Activated naive CD4-positive, alpha-beta T cell treated with anti-CD3 and anti-CD28 coated beads for 36 hours (primary cell): ENCODE measurements at regions of chr3 and their contacts with region 1.

Region 1: DNA sequence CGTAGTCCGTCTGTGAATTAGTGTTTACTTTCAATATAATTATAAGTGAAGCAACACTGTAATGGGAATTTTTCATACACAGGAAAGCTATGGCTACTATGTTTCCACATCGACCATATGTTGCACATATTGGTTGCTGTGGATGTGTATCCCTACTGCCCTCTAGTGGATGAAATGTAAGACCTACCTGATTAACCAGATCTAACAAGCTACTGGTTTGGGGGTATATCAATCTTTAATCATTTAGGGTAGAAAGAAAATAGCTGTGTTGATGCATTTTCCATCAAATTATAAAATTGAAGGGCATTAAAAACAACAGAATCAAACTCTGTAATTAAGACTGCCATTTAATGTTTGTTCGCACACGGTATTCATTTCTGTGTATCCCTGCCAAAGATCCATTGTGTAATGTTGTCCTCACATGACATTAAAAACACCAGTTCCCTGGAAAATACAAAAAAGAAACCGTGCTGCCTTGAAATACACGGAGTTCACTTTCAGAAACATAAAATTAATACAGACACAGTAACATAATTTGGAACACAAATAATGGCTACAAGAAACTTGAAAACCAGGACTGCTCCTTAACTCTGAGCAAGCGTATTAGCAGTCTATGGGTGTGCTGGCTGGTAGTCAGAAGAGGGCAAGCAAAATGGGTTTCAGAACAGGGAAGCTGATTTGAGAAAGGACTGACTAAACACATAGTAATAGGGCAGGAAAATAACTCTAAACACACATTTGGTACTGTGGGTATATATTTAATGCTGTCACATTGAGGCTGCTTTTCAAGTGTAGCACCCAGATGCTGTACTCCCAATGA is 125.1 kb downstream of the TIGIT start:
- DNase-seq: no peak
- H3K4me3 Mint-ChIP-seq: peak overlapping the region; percentile 36
- H3K27ac Mint-ChIP-seq: peak overlapping the region; percentile 56
- H3K4me1 Mint-ChIP-seq: peaks cover 32% of the 10 kb centered on the region
- H3K27me3 Mint-ChIP-seq: no peaks in the 10 kb centered on the region

Region 2: DNA sequence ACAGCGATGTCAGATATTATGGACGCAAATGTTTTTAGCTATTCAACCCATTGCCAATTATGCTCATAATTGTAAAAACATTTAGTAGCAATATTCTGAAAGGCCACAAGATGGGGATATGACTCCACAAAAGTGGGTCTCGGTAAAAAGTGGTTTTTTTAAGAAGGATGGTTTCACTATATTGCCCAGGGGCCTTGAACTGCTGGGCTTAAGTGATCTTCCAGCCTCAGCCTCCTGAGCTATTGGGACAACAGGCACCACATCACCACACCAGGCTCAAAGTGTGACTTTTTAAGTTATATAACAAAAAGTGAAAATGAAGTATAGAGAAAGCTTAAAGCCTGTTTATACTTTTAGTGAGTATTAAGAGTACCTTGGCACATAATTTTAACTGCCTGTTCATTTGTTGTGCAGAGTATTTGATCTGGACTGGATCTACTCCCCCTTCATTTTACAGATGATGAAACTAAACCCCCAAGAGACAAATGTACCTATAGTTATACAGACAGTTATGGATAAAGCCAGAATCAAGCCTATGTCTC is 682.3 kb before region 1 on chr3:
- CTCF ChIA-PET with region 1: no interaction called
- intact Hi-C with region 1: loop called (anchors 2 kb)
- DNase-seq: no peak
- H3K4me3 Mint-ChIP-seq: no peak overlapping the region
- H3K27ac Mint-ChIP-seq: peak overlapping the region; percentile 56
- H3K4me1 Mint-ChIP-seq: peaks cover 65% of the 10 kb centered on the region
- H3K27me3 Mint-ChIP-seq: no peaks in the 10 kb centered on the region

Region 3: DNA sequence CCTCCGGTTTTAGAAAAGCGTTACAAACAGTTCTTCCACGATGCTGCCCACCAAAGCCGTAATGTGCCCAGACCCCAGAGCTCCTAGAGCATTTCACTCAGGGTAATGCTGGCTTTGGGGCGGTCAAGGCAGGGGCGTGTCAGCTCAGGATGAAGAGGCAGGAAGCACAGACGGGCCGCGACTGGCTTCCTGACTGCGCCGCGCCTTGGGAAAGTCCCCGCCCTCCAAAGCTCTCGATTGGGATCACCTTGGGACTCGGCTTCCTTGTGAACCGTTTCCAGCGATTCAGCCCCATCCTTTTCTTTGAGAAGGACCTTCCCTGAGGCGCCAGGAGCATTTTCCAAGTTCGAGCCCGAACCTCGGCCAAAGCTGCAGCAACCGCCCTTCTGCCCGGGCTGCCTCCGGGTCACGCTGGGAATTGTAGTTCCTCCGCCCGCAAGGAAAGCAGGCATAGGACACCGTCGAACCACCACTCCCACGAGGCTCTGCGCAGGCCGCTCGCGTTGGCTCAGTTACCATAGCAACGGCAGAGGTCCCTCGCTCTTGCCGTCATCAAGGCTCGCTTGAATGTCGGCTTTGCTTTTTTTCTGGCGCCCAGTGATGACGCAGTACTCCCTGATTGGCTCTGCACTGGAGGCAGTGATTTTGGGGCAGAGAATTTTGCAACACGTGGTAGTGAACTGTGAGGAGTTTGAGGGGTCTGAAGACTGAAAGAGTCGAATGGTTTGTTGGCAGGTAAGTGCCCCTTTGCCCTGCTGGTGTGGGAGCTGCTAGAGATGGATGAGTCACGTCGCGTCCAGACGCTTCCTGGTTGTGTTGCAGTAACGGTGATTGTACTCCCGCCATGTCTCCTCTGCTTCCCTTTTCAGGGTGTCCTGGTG is 362.6 kb before region 1 on chr3 and contains the starts of genes CCDC191 and QTRT2:
- CTCF ChIA-PET with region 1: no interaction called
- intact Hi-C with region 1: loop called (anchors 1 kb)
- DNase-seq: peak; percentile 100
- H3K4me3 Mint-ChIP-seq: peak within 1 kb of the TSS; percentile 97
- H3K27ac Mint-ChIP-seq: peak within 1 kb of the TSS; percentile 95
- H3K4me1 Mint-ChIP-seq: peaks cover 36% of the 10 kb centered on the region
- H3K27me3 Mint-ChIP-seq: no peaks in the 10 kb centered on the region
- total RNA-seq, gene CCDC191: 1.8 to 2.0 TPM
- total RNA-seq, gene QTRT2: 23.0 to 27.8 TPM

Region 4: DNA sequence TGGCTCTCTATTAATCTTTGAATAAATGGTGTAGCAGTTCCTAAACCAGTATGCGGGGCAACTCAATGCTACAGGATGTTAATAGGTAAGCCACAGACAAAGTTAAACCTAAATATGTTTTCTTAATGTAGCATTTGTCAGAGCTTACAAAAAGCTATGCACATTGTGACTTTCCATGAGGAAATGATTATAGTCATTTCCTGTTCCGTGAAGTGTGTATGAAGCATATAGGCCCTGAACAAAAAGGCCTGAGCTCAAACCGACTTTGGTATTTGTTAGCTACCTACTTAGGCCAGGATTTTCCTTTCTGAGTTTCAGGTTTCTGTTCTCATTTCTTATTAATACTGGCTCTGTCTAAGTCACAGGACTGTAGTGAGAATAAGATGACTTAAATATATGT is 195.8 kb before region 1 on chr3:
- CTCF ChIA-PET with region 1: interaction called, 4 read pairs
- intact Hi-C with region 1: loop called (anchors 1 kb)
- DNase-seq: peak; percentile 38
- H3K4me3 Mint-ChIP-seq: no peak overlapping the region
- H3K27ac Mint-ChIP-seq: peak overlapping the region; percentile 84
- H3K4me1 Mint-ChIP-seq: peaks cover 80% of the 10 kb centered on the region
- H3K27me3 Mint-ChIP-seq: no peaks in the 10 kb centered on the region

Region 5: DNA sequence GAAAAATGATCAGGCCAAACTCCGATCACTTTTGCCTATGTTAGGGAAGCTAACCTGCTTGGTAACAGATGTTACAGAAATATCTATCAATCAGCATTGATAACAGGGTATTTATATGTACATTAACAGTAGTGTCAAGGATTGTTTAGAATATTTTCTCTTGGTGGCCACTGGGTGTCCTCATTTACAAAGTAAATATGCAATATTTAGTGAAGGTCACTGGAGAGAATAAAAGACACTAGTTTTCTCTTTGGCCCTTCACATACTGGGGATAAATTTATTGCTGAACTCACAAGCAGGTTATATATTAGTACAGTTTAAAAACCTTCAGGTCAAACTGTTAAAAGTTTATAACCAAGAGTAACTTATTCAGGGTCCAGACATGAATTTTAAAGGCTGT is 56.1 kb before region 1 on chr3:
- CTCF ChIA-PET with region 1: interaction called, 3 read pairs
- intact Hi-C with region 1: loop called (anchors 1 kb)
- DNase-seq: no peak
- H3K4me3 Mint-ChIP-seq: no peak overlapping the region
- H3K27ac Mint-ChIP-seq: no peak overlapping the region
- H3K4me1 Mint-ChIP-seq: peaks cover 2% of the 10 kb centered on the region
- H3K27me3 Mint-ChIP-seq: no peaks in the 10 kb centered on the region

Region 6: DNA sequence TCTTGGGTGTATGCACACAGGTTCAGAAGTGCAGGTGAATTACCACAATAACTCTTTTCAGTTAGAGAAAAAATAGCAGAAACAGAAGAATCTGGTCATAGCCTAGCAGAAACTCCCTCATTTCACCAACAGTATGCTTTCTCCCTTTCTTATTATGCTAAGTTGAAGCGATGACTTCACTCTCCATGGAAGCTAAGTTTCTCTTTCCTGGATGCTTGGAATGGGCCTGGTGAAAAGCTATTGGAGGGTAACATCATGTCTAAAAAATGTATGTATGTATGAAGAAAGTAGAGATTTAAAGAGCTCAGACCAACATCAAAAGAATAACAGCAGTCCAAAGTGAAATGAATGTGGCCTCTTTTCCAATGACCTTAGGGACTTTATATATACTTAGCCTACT is 20.4 kb after region 1 on chr3:
- CTCF ChIA-PET with region 1: interaction called, 5 read pairs
- intact Hi-C with region 1: loop called (anchors 2 kb)
- DNase-seq: no peak
- H3K4me3 Mint-ChIP-seq: no peak overlapping the region
- H3K27ac Mint-ChIP-seq: no peak overlapping the region
- H3K4me1 Mint-ChIP-seq: peaks cover 7% of the 10 kb centered on the region
- H3K27me3 Mint-ChIP-seq: no peaks in the 10 kb centered on the region

Region 7: GRCh38 chr3:114504941-114505632 is 86.2 kb after region 1 on chr3:
- CTCF ChIA-PET with region 1: interaction called, 5 read pairs
- intact Hi-C with region 1: loop called (anchors 1 kb)
- DNase-seq: peak; percentile 12
- H3K4me3 Mint-ChIP-seq: no peak overlapping the region
- H3K27ac Mint-ChIP-seq: no peak overlapping the region
- H3K4me1 Mint-ChIP-seq: peaks cover 44% of the 10 kb centered on the region
- H3K27me3 Mint-ChIP-seq: peaks cover 17% of the 10 kb centered on the region

Region 8: DNA sequence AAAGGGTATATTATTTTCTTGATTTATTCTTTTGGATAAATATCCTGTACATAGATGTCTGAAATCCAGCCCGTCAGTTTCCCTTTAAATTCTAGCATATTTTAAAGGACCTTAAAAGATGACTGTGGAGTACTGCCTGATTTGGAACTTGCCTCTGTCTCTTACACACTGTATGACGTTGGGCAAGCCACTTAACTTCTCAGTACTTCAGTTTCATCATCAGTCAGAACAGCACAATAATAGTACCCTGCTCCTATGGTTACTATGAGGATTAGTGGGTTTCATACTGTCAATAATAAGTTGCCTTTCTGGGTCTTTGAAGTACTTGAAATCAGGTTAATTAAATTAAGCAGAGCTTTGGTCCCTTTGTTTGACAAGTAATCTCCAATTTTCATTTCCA is 249.2 kb after region 1 on chr3:
- CTCF ChIA-PET with region 1: no interaction called
- intact Hi-C with region 1: no loop called
- DNase-seq: no peak
- H3K4me3 Mint-ChIP-seq: no peak overlapping the region
- H3K27ac Mint-ChIP-seq: no peak overlapping the region
- H3K4me1 Mint-ChIP-seq: peaks cover 2% of the 10 kb centered on the region
- H3K27me3 Mint-ChIP-seq: no peaks in the 10 kb centered on the region